Activated CD4-positive, alpha-beta T cell treated with anti-CD3 and anti-CD28 coated beads for 36 hours (primary cell): ENCODE measurements at regions of chr16 and their contacts with region 1.

Region 1: DNA sequence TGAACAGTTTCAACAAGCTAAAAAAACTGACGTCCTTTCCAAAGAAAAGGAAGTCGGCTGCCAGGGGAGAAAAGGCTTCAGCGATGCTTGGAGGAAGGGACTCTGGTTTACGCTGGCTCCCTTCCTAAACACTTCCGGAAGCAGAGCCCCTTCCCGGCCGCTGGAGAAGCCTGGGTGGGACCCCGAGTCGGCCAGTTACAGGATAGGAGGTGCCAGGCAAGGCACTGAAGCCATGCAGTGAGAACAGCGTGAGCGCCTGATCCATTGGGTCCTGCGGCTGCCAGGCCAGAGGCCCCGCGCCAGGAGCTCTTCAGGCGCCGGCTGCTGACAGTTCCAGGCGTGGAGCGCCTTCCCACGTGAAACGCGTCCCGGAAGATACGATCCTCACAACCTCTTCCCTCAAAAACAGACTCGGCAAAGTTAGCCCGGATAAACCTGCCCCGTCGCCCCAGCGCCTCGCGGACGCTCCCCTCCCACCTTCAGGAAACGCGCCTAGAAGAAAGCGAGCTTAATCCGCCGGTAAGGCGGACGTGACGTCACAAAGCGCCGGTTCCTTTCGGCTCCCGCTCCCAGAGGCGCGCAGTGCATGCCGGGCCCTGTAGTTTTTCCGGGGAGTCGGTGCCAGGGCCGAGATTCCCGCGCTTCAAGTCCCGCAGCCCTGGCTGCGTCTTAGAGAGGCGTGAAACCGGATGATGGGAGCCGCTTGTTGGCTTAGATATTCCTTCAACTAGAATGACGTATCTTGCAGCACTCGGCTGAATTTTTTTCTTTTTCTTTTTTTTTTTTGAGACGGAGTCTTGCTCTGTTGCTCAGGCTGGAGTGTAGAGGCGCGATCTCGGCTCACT is at the start of gene ADAT1:
- DNase-seq: peak; percentile 99
- ATAC-seq: peak; percentile 94
- H3K4me3 Mint-ChIP-seq: peak within 1 kb of the TSS; percentile 93
- H3K27ac Mint-ChIP-seq: peak within 1 kb of the TSS; percentile 95
- H3K4me1 Mint-ChIP-seq: peaks cover 45% of the 10 kb centered on the region
- H3K27me3 Mint-ChIP-seq: no peaks in the 10 kb centered on the region
- total RNA-seq, gene ADAT1: 48.3 to 55.7 TPM

Region 2: GRCh38 chr16:74296432-74297144 is 1326.4 kb before region 1 on chr16 and contains the start of gene PSMD7:
- CTCF ChIA-PET with region 1: no interaction called
- POLR2A ChIA-PET with region 1: no interaction called
- intact Hi-C with region 1: loop called in 1 of 2 experiments (anchors 1 kb)
- DNase-seq: peak; percentile 95
- ATAC-seq: peak; percentile 91
- H3K4me3 Mint-ChIP-seq: peak within 1 kb of the TSS; percentile 98
- H3K27ac Mint-ChIP-seq: peak within 1 kb of the TSS; percentile 99
- H3K4me1 Mint-ChIP-seq: peaks cover 34% of the 10 kb centered on the region
- H3K27me3 Mint-ChIP-seq: no peaks in the 10 kb centered on the region
- total RNA-seq, gene PSMD7: 122 to 134 TPM

Region 3: GRCh38 chr16:74984535-74985296 is 638.3 kb before region 1 on chr16 and contains the start of gene WDR59:
- CTCF ChIA-PET with region 1: no interaction called
- POLR2A ChIA-PET with region 1: no interaction called
- intact Hi-C with region 1: loop called in 1 of 2 experiments (anchors 10 kb)
- DNase-seq: peak; percentile 100
- ATAC-seq: peak; percentile 100
- H3K4me3 Mint-ChIP-seq: peak within 1 kb of the TSS; percentile 85
- H3K27ac Mint-ChIP-seq: peak within 1 kb of the TSS; percentile 85
- H3K4me1 Mint-ChIP-seq: peaks cover 17% of the 10 kb centered on the region
- H3K27me3 Mint-ChIP-seq: no peaks in the 10 kb centered on the region
- total RNA-seq, gene WDR59: 69.2 to 91.4 TPM

Region 4: DNA sequence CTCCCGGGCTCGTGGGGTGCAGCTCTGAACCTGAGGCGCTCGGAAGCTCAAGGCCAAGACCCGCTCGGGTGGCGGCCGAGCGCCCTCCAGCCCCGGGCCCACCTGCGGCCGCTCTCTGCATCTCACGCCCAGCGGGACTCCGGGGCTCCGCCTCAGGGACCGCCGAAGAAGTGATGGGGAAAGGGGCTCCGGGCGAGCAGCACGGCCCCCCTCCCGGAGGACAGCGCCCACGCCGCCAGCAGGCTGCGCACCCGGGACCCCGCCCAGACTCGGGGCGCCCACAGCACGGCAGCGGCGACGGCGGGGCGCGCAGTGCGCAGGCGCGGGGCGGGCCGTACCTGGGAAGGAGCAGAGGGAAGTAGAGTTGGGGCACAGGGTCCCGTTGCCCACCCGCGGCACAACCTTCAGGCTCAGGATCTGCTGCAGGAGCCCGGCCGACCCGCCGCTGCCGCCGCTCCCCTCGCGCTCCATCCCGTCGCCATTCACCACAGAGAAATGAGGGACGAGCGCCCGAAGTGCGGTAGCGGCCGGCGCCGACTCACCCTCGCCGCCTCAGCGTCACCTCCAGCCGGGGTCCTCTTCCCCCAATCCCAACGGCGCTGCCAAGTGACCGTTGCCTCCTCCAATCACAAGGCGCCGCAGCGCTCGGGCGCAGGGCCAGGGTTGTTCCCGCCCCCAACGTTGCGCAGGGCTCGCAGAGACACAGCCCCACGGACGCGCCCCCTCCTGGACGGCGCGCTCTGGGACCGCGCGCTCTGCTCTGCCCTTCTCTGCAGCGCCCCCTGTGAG is 158.7 kb before region 1 on chr16 and contains the start of gene TMEM170A:
- CTCF ChIA-PET with region 1: interaction called, 3 read pairs
- POLR2A ChIA-PET with region 1: no interaction called
- intact Hi-C with region 1: loop called (anchors 1 to 2 kb)
- DNase-seq: peak; percentile 100
- ATAC-seq: peak; percentile 94
- H3K4me3 Mint-ChIP-seq: peak within 1 kb of the TSS; percentile 98
- H3K27ac Mint-ChIP-seq: peak within 1 kb of the TSS; percentile 94
- H3K4me1 Mint-ChIP-seq: peaks cover 45% of the 10 kb centered on the region
- H3K27me3 Mint-ChIP-seq: no peaks in the 10 kb centered on the region
- total RNA-seq, gene TMEM170A: 22.0 to 30.5 TPM

Region 5: GRCh38 chr16:75555707-75556430 is 67.1 kb before region 1 on chr16 and contains the start of gene TMEM231:
- CTCF ChIA-PET with region 1: interaction called, 6 read pairs
- POLR2A ChIA-PET with region 1: interaction called, 4 read pairs
- intact Hi-C with region 1: loop called (anchors 1 kb)
- DNase-seq: peak; percentile 99
- ATAC-seq: peak; percentile 98
- H3K4me3 Mint-ChIP-seq: peak within 1 kb of the TSS; percentile 79
- H3K27ac Mint-ChIP-seq: peak within 1 kb of the TSS; percentile 71
- H3K4me1 Mint-ChIP-seq: peaks cover 7% of the 10 kb centered on the region
- H3K27me3 Mint-ChIP-seq: peaks cover 3% of the 10 kb centered on the region
- total RNA-seq, gene TMEM231: 3.6 to 4.1 TPM

Region 6: DNA sequence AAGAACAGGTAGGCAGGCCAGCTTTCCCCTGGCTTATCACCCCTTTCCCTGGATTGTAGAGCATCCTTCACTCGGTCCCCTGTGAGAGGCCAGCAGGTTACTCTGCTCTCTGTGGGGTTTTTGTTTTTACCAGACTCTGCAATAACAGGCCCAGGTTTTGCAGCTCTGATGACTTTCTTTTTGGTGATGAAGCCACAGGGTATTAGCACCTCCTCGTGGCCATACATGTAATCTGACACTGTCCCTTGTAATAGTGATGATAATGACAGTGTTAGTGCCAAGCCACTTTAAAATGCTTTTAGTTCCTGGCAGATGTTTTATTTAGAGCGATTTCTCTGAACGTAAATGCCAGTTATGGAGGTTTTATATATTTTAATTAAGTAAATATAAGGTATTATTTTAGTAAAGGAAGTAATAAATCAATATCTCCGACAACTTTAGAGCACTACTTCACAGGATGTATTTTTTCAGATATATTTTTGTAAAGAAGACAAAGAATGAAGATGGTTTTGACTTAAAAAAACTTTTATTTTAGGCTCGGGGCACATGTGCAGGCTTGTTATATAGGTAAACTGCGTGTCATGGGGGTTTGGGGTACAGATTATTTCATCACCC is 141.3 kb after region 1 on chr16:
- CTCF ChIA-PET with region 1: no interaction called
- POLR2A ChIA-PET with region 1: no interaction called
- intact Hi-C with region 1: loop called (anchors 1 to 2 kb)
- DNase-seq: peak; percentile 70
- ATAC-seq: peak; percentile 93
- H3K4me3 Mint-ChIP-seq: no peak overlapping the region
- H3K27ac Mint-ChIP-seq: no peak overlapping the region
- H3K4me1 Mint-ChIP-seq: peaks cover 11% of the 10 kb centered on the region
- H3K27me3 Mint-ChIP-seq: peaks cover 2% of the 10 kb centered on the region